ENCODE measurements at regions of chr11 and their contacts with region 1.

Region 1: GRCh38 chr11:69686452-69686851 is 11.3 kb upstream of the LTO1 start:
- DNase-seq: no peak
- H3K4me3 ChIP-seq: no peak overlapping the region
- H3K27ac ChIP-seq: no peak overlapping the region
- H3K4me1 ChIP-seq: no peaks in the 10 kb centered on the region
- H3K27me3 ChIP-seq: no peaks in the 10 kb centered on the region
- CTCF ChIP-seq: no peak
- POLR2A ChIP-seq: no peak

Region 2: GRCh38 chr11:69654569-69655327 is 31.7 kb before region 1 on chr11:
- intact Hi-C with region 1: no loop called
- DNase-seq: peak; percentile 89
- H3K4me3 ChIP-seq: peak overlapping the region in 1 of 2 donors; percentile 21
- H3K27ac ChIP-seq: peak overlapping the region; percentile 82 to 91
- H3K4me1 ChIP-seq: peaks cover 6% of the 10 kb centered on the region
- H3K27me3 ChIP-seq: no peaks in the 10 kb centered on the region
- CTCF ChIP-seq: peak in 2 of 4 experiments; percentile 17 to 24
- POLR2A ChIP-seq: no peak

Region 3: GRCh38 chr11:69718147-69718546 is 31.7 kb after region 1 on chr11:
- intact Hi-C with region 1: no loop called
- DNase-seq: no peak
- H3K4me3 ChIP-seq: no peak overlapping the region
- H3K27ac ChIP-seq: no peak overlapping the region
- H3K4me1 ChIP-seq: no peaks in the 10 kb centered on the region
- H3K27me3 ChIP-seq: peaks cover 2% of the 10 kb centered on the region
- CTCF ChIP-seq: no peak
- POLR2A ChIP-seq: no peak

Region 4: GRCh38 chr11:69888483-69889076 is 202.1 kb after region 1 on chr11:
- intact Hi-C with region 1: loop called (anchors 5 kb)
- DNase-seq: peak; percentile 55
- H3K4me3 ChIP-seq: no peak overlapping the region
- H3K27ac ChIP-seq: no peak overlapping the region
- H3K4me1 ChIP-seq: no peaks in the 10 kb centered on the region
- H3K27me3 ChIP-seq: no peaks in the 10 kb centered on the region
- CTCF ChIP-seq: peak; percentile 64 to 88 (median 80)
- POLR2A ChIP-seq: no peak

Region 5: GRCh38 chr11:69909561-69910496 is 223.4 kb after region 1 on chr11:
- intact Hi-C with region 1: loop called (anchors 5 kb)
- DNase-seq: no peak
- H3K4me3 ChIP-seq: no peak overlapping the region
- H3K27ac ChIP-seq: no peak overlapping the region
- H3K4me1 ChIP-seq: no peaks in the 10 kb centered on the region
- H3K27me3 ChIP-seq: no peaks in the 10 kb centered on the region
- CTCF ChIP-seq: peak; percentile 26 to 51 (median 40)
- POLR2A ChIP-seq: no peak